Activated naive CD8-positive, alpha-beta T cell treated with anti-CD3 and anti-CD28 coated beads, Interleukin-2, amount 10 ng/mL, durations not matched to agents 7 days and 5 days (primary cell): ENCODE measurements at regions of chr7 and their contacts with region 1.

Region 1: DNA sequence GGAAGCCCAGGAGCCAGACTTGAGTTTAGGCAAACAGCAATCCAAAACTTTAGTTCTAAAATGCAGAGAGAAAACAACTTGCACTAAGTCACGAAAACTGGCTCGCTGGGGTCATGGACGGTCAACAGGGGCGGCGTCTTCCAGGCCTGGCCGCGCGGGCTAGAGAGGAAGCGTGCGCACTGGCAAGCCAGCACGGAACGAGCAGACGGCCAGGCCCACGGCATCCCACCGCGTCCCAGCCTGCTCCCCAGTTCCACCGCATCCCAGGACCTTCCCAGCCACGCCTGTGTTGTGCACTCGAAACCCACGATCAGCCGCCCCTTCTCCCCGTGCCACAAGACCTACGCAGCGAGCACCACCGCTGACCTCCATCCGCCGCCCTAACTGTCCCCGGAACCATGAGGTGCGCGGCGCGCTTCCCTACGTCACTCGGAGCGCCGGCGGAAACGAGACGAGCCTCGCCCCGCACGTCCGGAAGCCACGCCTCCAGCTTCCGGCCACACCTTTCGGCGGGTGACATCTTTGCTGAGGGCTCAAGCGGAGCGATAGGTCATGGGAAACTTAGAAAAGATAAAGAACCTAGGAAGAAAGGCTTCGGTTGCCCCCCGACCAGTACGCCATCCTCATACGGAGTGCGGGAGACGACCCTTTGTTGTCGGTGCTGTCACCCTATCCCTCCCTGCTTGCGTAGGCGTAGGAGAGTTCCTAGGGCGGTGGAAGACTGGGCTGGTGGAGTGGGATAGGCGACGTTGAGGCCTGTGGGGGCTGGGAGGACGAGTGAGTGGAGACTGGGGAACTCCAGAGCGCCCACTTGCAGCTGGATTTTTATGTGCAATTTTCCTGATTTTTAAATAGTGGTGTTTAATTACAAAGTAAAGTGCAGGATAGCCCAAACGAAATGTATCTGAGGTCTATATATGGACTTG is at the start of gene TBRG4:
- DNase-seq: peak; percentile 97
- ATAC-seq: peak; percentile 86
- H3K4me3 Mint-ChIP-seq: peak within 1 kb of the TSS; percentile 97
- H3K27ac Mint-ChIP-seq: peak within 1 kb of the TSS; percentile 94
- H3K4me1 Mint-ChIP-seq: peaks cover 35% of the 10 kb centered on the region
- H3K27me3 Mint-ChIP-seq: peaks cover 10% of the 10 kb centered on the region
- total RNA-seq, gene TBRG4: 123 to 127 TPM

Region 2: DNA sequence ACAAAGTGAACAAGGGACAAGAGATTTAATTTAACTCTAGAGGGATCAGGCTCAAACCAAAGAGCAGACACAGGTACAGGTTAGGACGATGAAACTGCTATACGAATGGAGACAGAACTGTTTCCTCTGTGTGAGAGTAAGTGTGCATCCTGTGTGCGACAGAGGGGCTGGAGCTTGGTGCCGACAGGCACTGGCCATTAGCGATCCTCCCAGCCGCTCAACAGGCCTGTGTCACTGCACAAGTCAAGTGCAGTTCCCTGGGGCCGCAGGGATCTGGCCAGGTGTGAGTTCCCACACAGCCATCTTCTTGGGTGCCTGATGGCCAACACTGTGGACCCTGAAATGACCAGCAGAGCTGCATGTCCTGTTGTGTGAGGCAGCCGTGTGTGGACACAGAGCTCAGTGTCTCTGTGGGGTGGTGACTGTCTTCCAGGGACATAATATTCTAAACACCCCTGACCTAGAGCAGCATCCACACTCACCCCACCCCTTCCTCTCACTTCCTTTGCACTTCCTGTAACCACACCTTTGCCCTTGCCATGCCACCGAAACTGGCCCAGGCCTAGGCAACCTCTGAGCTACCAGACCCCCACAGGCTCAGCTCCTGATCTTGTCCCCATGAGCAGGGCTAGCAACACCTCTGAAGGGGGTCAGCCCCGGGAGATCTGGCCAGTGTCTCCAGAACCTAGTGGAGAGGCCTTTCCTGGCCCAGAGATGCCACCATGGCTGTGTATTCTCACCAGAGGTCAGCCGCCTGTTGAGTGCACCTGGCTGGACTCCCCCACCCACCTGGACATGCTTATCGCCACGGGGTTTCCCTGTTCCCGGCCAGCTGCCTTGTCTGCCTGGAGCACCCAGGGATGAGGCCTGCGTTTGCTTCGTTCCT is 11.7 kb after region 1 on chr7:
- POLR2A ChIA-PET with region 1: interaction called, 37 read pairs
- DNase-seq: no peak
- ATAC-seq: peak; percentile 67
- H3K4me3 Mint-ChIP-seq: peak overlapping the region; percentile 39
- H3K27ac Mint-ChIP-seq: peak overlapping the region; percentile 91
- H3K4me1 Mint-ChIP-seq: peaks cover 17% of the 10 kb centered on the region
- H3K27me3 Mint-ChIP-seq: no peaks in the 10 kb centered on the region